Activated CD4-positive, alpha-beta memory T cell treated with anti-CD3 and anti-CD28 coated beads for 36 hours (primary cell): ENCODE measurements at regions of chr2 and their contacts with region 1.

Region 1: GRCh38 chr2:156341452-156342253 is 9.1 kb upstream of the NR4A2 start:
- DNase-seq: peak; percentile 93
- H3K4me3 Mint-ChIP-seq: peak overlapping the region; percentile 94
- H3K27ac Mint-ChIP-seq: peak overlapping the region; percentile 99
- H3K4me1 Mint-ChIP-seq: peaks cover 47% of the 10 kb centered on the region
- H3K27me3 Mint-ChIP-seq: no peaks in the 10 kb centered on the region

Region 2: GRCh38 chr2:156400706-156401678 is 59.3 kb after region 1 on chr2:
- CTCF ChIA-PET with region 1: interaction called, 11 read pairs
- POLR2A ChIA-PET with region 1: interaction called, 28 read pairs
- intact Hi-C with region 1: loop called (anchors 1 kb)
- DNase-seq: peak; percentile 82
- H3K4me3 Mint-ChIP-seq: peak overlapping the region; percentile 84
- H3K27ac Mint-ChIP-seq: peak overlapping the region; percentile 95
- H3K4me1 Mint-ChIP-seq: peaks cover 18% of the 10 kb centered on the region
- H3K27me3 Mint-ChIP-seq: peaks cover 5% of the 10 kb centered on the region

Region 3: GRCh38 chr2:156476850-156477206 is 135.2 kb after region 1 on chr2:
- CTCF ChIA-PET with region 1: interaction called, 3 read pairs
- POLR2A ChIA-PET with region 1: no interaction called
- intact Hi-C with region 1: loop called (anchors 2 kb)
- DNase-seq: peak; percentile 35
- H3K4me3 Mint-ChIP-seq: no peak overlapping the region
- H3K27ac Mint-ChIP-seq: peak overlapping the region; percentile 53
- H3K4me1 Mint-ChIP-seq: peaks cover 38% of the 10 kb centered on the region
- H3K27me3 Mint-ChIP-seq: no peaks in the 10 kb centered on the region

Region 4: GRCh38 chr2:156526950-156527636 is 185.4 kb after region 1 on chr2:
- CTCF ChIA-PET with region 1: no interaction called
- POLR2A ChIA-PET with region 1: no interaction called
- intact Hi-C with region 1: loop called (anchors 1 kb)
- DNase-seq: no peak
- H3K4me3 Mint-ChIP-seq: no peak overlapping the region
- H3K27ac Mint-ChIP-seq: no peak overlapping the region
- H3K4me1 Mint-ChIP-seq: peaks cover 9% of the 10 kb centered on the region
- H3K27me3 Mint-ChIP-seq: no peaks in the 10 kb centered on the region

Region 5: GRCh38 chr2:156553714-156554442 is 212.2 kb after region 1 on chr2:
- CTCF ChIA-PET with region 1: no interaction called
- POLR2A ChIA-PET with region 1: no interaction called
- intact Hi-C with region 1: no loop called
- DNase-seq: no peak
- H3K4me3 Mint-ChIP-seq: no peak overlapping the region
- H3K27ac Mint-ChIP-seq: no peak overlapping the region
- H3K4me1 Mint-ChIP-seq: peaks cover 2% of the 10 kb centered on the region
- H3K27me3 Mint-ChIP-seq: no peaks in the 10 kb centered on the region